PC-3 (cell line): ENCODE measurements at regions of chr10 and their contacts with region 1.

Region 1: DNA sequence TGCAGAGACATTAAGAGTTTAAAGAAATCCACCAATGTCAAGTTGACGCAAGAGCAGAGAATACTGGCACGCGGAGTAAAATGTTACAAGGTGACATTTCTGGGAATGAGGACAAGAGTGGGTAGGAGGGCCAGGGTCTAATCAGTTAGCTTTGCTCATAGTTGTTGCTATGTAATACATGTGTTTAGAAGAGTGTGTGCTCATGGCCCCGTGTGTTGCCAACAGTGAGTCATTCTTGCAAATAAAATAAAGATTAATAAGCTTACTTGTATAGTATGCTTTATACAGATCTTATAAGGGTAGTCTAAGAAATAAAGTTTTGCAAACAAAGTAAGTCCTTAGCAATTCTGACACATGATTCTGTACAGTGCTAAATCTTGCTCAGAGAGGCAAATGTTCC is 64.5 kb downstream of the DNMBP start:
- DNase-seq: peak; percentile 80
- ATAC-seq: peak; percentile 98
- H3K4me3 ChIP-seq: no peak overlapping the region
- H3K27ac ChIP-seq: peak overlapping the region; percentile 67
- H3K4me1 ChIP-seq: peaks cover 21% of the 10 kb centered on the region
- H3K27me3 ChIP-seq: no peaks in the 10 kb centered on the region
- CTCF ChIP-seq: no peak

Region 2: DNA sequence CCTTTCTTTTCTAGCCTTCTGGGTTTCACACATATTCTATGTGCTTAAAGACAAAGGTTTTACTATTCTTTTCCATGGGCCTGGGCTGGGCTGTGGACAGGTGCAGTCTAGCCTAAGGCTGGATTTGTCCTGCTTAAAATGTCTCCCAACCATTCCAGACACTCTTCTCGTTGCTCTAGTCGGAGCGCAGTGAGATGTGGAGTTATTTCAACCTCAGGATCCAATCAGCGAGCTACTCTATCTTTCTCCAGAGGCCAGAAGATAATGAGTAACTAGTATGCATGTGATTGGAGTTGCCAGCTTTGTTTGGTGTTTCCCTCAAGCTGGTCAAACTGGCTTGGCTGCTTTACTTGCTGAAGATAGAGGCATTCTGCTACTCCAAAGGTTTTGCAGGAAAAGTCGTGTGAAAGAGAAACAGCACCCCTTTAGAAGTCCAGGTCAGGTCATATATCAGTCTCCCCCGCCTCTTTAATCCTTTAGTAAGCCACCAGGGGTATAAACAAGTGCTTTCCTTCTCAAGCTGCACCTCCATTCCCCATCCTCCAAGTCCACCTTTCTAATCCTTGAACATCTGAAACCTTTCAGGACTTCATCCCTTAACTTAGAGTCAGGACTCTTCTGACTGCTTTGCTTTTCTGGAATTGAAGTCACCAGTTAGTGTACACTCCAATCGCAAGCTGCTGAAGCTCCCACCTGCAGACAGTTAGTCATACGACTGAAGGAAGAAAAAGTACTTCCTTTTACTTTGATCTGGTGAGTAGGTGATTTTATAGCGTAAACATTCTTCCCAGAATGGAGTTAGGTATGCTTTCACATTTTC is 14.3 kb before region 1 on chr10:
- CTCF ChIA-PET with region 1: no interaction called
- POLR2A ChIA-PET with region 1: no interaction called
- intact Hi-C with region 1: loop called (anchors 2 kb)
- DNase-seq: peak; percentile 77
- ATAC-seq: peak; percentile 73
- H3K4me3 ChIP-seq: peak overlapping the region; percentile 35; the same call in 1 of the 2 replicates
- H3K27ac ChIP-seq: peak overlapping the region; percentile 77
- H3K4me1 ChIP-seq: peaks cover 38% of the 10 kb centered on the region
- H3K27me3 ChIP-seq: no peaks in the 10 kb centered on the region
- CTCF ChIP-seq: no peak

Region 3: GRCh38 chr10:100020142-100020885 is 75.1 kb after region 1 on chr10:
- CTCF ChIA-PET with region 1: no interaction called
- POLR2A ChIA-PET with region 1: no interaction called
- intact Hi-C with region 1: no loop called
- DNase-seq: peak; percentile 65
- ATAC-seq: peak; percentile 84
- H3K4me3 ChIP-seq: peak overlapping the region; percentile 10; the same call in 1 of the 2 replicates
- H3K27ac ChIP-seq: peak overlapping the region; percentile 51
- H3K4me1 ChIP-seq: peaks cover 27% of the 10 kb centered on the region
- H3K27me3 ChIP-seq: no peaks in the 10 kb centered on the region
- CTCF ChIP-seq: no peak